Activated T-helper 2 cell treated with anti-CD3 and anti-CD28 coated beads, Interferon-gamma antibody, Interleukin-2, Interleukin-4, amounts not matched to agents 10 μg/mL and 5 μg/mL and 100 μg/mL, durations not matched to agents 14 hours and 24 hours and 36 hours (primary cell): ENCODE measurements at regions of chr11 and their contacts with region 1.

Region 1: DNA sequence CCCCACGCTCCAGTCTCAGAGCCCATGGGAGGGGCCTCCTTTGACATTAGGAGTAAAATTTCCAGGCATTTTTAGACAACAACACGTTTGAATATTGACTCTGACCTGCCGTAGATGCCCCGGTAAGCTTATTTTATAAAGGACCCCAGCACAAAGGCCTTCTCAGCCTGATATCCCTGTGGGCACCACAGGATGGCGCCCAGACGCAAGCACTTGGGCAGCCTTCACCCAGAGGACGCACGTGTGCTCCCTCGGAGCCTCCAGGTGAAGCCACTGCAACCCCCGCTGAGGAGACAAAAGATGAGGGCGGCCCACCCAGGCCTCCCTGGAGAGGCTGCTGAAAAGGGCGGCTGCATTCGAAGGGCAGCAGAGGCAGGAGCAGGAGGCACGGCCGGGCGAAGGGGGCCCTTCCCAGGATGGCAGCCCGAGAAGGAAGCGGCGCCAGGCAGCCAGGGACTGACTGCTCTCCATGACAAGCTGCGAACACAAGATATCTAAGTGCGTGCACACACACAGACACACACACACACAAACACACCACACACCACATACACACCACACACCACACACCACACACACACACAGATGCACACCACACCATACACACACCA is 15.2 kb upstream of the TH start:
- DNase-seq: no peak
- H3K4me3 Mint-ChIP-seq: no peak overlapping the region
- H3K27ac Mint-ChIP-seq: no peak overlapping the region
- H3K4me1 Mint-ChIP-seq: no peaks in the 10 kb centered on the region
- H3K27me3 Mint-ChIP-seq: peaks cover 3% of the 10 kb centered on the region

Region 2: DNA sequence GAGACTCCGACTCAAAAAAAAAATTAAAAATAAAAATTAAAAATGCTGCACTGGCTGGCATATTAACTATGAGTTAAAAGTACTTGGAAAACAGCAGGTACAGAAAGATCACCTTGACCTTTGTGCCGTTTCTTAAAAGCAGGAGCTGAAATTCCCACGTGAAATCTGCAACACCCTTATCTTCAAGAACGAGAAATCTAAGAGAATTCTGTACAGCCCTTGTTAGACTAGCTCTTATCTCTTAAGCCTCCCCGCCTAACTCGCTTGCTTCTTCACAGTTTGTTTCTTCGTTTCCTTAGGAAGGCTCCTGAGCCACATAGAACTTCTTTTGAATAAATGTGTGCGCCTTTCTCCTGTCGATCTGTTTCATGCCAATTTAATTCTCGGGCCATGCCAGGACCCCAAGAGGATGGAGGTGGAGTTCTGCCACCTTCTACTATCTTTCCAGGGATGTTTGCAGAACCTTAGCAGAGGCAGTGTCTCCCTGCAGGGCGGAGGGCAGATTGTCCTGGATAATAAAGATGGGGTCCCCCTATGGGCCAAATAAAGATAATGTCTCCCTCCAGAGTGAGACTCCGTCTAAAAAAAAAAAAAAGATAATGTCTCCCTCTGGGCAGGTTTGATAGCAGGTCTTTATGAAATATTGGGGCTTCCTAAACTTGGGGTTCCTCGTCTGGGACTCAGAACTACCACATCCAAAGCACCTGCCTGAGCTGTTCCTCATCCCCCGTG is 379.3 kb before region 1 on chr11:
- intact Hi-C with region 1: no loop called
- DNase-seq: no peak
- H3K4me3 Mint-ChIP-seq: no peak overlapping the region
- H3K27ac Mint-ChIP-seq: no peak overlapping the region
- H3K4me1 Mint-ChIP-seq: no peaks in the 10 kb centered on the region
- H3K27me3 Mint-ChIP-seq: peaks cover 21% of the 10 kb centered on the region

Region 3: GRCh38 chr11:2166091-2166851 is 20.5 kb before region 1 on chr11:
- intact Hi-C with region 1: no loop called
- DNase-seq: no peak
- H3K4me3 Mint-ChIP-seq: no peak overlapping the region
- H3K27ac Mint-ChIP-seq: no peak overlapping the region
- H3K4me1 Mint-ChIP-seq: no peaks in the 10 kb centered on the region
- H3K27me3 Mint-ChIP-seq: no peaks in the 10 kb centered on the region

Region 4: GRCh38 chr11:2217211-2218030 is 30.6 kb after region 1 on chr11:
- intact Hi-C with region 1: no loop called
- DNase-seq: peak; percentile 4
- H3K4me3 Mint-ChIP-seq: no peak overlapping the region
- H3K27ac Mint-ChIP-seq: no peak overlapping the region
- H3K4me1 Mint-ChIP-seq: peaks cover 3% of the 10 kb centered on the region
- H3K27me3 Mint-ChIP-seq: peaks cover 8% of the 10 kb centered on the region

Region 5: DNA sequence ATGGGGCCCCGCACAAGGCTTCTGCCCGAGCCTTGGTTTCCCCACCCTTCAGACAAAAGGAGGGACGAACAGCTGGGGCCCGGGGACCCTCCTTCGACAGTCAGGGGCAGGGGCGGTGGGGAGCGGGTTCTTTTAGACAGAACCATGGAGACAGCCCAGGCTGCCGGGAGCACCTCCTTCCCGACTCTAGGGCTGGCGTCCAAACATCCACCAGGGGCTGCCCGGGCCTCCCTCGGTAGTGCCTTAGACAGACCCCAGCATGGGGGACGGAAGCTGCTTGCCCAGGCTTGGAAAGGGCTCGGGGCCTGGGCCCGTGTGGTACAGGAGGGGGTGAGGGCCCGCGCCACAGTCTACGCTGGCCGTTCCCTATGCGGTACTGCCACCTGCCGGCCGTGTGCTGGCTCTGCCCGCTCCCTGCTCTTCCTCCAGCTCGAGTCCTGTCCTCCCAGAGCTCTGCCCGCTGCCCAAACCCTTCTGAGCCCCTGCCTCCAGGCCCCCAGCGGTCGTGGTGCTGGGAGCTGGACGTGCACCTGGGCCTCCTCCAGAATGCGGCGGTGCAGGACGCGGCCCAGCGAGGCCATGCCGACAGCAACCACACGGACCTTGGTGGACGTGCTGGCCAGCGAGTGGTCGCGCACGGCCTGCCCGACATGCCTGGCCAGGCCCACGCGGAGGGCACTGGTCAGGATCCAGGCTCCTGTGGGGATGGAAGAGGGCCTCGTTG is 233.9 kb after region 1 on chr11:
- intact Hi-C with region 1: loop called (anchors 2 kb)
- DNase-seq: peak; percentile 58
- H3K4me3 Mint-ChIP-seq: no peak overlapping the region
- H3K27ac Mint-ChIP-seq: no peak overlapping the region
- H3K4me1 Mint-ChIP-seq: no peaks in the 10 kb centered on the region
- H3K27me3 Mint-ChIP-seq: no peaks in the 10 kb centered on the region